Prostate gland (tissue), 2 donors: ENCODE measurements at regions of chr16 and their contacts with region 1.

Region 1: GRCh38 chr16:2429034-2429770 is at the start of gene CCNF:
- DNase-seq: peak; percentile 97
- H3K4me3 ChIP-seq: peak within 1 kb of the TSS; percentile 75 to 91
- H3K27ac ChIP-seq: peak within 1 kb of the TSS; percentile 65 to 82
- H3K4me1 ChIP-seq: no peaks in the 10 kb centered on the region
- H3K27me3 ChIP-seq: no peaks in the 10 kb centered on the region
- CTCF ChIP-seq: peak in 1 of 4 experiments; percentile 32
- POLR2A ChIP-seq: peak; percentile 56
- total RNA-seq, gene CCNF: 7.3 to 8.0 TPM

Region 2: DNA sequence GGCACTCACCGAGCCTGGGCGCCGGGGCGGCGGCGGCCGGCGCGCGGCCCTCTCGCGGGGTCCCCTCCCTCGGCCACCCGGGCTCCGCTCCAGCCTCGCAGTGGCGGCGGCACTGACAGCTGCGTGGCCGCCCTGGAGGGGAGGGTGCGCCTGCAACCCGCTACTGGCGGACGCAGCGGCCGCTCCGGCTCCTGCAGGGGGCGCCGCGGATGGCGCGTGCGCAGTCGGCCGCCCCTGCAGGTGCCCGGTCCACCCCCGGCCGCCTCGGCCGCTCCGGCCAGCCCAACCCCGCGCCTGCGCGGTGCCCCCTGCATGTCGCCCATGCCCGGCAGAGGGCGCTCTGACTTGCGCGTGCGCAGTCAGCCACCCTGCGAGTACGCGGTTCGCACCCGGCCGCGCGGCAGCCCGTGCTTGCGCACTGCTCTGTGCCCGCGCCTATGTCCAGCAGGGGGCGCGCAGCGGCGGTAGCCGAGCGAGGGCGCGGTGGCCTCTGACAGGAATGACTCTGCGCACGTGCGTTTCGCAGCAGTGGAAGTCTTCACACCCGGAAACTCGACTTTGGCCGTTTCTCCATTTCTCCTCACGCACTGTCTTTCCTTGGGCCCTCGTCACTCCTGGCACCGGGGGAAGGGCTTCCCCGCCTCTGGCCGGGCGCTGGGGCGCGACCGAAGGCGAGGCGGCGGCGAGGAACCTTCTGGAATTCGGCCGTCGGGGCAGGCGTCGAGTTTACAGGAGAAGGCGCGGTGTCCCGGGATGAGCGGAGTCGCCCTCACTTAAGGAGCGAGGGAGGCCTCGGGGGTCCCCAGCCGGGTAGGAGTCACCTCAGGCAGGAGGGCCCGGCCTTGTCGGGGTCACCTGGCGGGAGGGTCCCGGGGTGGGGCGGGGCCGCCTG is 88.4 kb before region 1 on chr16 and contains the start of gene ABCA3:
- intact Hi-C with region 1: loop called (anchors 5 kb)
- DNase-seq: peak; percentile 88
- H3K4me3 ChIP-seq: peak within 1 kb of the TSS; percentile 62 to 73
- H3K27ac ChIP-seq: peak within 1 kb of the TSS in 1 of 2 donors; percentile 44
- H3K4me1 ChIP-seq: no peaks in the 10 kb centered on the region
- H3K27me3 ChIP-seq: no peaks in the 10 kb centered on the region
- CTCF ChIP-seq: peak; percentile 100
- POLR2A ChIP-seq: no peak
- total RNA-seq, gene ABCA3: 8.2 to 24.7 TPM